ENCODE measurements at regions of chr14 and their contacts with region 1.

Region 1: GRCh38 chr14:54805521-54806322 is 96.9 kb downstream of the GCH1 start:
- DNase-seq: peak; percentile 91
- ATAC-seq: peak; percentile 87
- H3K4me3 Mint-ChIP-seq: no peak overlapping the region
- H3K27ac Mint-ChIP-seq: no peak overlapping the region
- H3K4me1 Mint-ChIP-seq: peaks cover 11% of the 10 kb centered on the region
- H3K27me3 Mint-ChIP-seq: peaks cover 18% of the 10 kb centered on the region

Region 2: DNA sequence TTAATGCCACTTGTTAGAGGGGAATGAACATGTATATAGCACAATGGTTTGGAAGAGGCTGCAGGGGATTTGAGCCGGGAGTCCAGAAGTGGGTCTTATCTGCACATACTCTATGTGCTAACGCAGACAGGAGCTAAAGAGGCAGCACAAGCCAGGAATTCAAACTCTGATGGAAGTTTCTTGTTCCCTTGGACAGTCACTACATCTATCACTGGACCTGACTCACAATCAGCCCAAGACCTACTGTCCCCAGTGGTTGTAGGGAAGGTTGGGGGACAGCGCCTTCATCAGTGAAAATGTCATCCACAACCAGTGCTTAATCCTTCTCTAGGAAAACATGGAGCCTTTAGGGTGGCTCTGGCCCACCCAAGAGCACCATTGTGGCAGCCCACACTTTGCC is 10.9 kb before region 1 on chr14:
- CTCF ChIA-PET with region 1: interaction called, 10 read pairs
- POLR2A ChIA-PET with region 1: no interaction called
- intact Hi-C with region 1: no loop called
- DNase-seq: no peak
- ATAC-seq: no peak
- H3K4me3 Mint-ChIP-seq: no peak overlapping the region
- H3K27ac Mint-ChIP-seq: no peak overlapping the region
- H3K4me1 Mint-ChIP-seq: no peaks in the 10 kb centered on the region
- H3K27me3 Mint-ChIP-seq: peaks cover 6% of the 10 kb centered on the region

Measured in activated CD4-positive, alpha-beta T cell treated with anti-CD3 and anti-CD28 coated beads for 36 hours (primary cell).